Activated T-helper 1 cell treated with anti-CD3 and anti-CD28 coated beads, Interleukin-12 subunit alpha, Interleukin-12 subunit beta, Interleukin-2, Interleukin-4 antibody, amounts not matched to agents 30 ng/mL and 10 ng/mL and 1 ng/mL, durations not matched to agents 14 hours and 24 hours and 36 hours (primary cell): ENCODE measurements at regions of chr10 and their contacts with region 1.

Region 1: DNA sequence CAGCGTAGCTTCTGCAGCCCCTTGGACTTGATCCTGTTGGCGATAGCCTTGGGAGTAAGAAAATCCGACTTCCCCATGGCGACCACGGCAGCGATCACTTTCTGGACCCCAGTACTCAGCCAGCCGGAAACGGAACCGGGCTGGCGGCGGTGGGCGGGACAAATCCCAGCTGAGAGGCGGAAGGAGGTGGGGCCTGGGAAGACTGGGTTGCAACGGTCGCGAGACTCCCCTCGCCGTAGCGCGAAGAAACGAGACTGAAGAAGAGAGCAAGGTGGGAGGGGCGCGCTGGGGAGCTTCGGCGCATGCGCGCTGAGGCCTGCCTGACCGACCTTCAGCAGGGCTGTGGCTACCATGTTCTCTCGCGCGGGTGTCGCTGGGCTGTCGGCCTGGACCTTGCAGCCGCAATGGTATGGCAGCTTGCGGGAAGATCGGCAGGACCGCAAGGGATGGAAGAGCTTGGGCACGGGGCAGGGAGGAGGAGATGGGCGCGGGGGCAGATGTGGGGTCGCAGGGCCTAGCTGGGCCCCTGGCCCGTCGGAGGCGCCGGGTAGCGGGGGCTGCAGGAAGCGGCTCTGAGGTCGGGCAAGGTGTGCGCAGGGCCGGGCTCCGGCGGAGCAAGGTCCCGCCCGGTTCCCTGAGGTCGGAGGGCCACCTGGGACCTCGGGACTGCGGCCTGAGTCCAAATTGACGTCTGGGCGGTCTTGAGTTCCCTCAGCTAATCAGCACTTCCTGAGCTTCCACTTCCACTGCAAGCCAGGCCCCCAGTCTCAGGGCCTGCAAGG is at the starts of genes ATP5F1C and KIN:
- DNase-seq: peak; percentile 97
- H3K4me3 Mint-ChIP-seq: no peak within 1 kb of the TSS
- H3K27ac Mint-ChIP-seq: peak within 1 kb of the TSS; percentile 75
- H3K4me1 Mint-ChIP-seq: peaks cover 47% of the 10 kb centered on the region
- H3K27me3 Mint-ChIP-seq: no peaks in the 10 kb centered on the region
- total RNA-seq, gene ATP5F1C: 316 and 329 TPM in 2 replicates
- total RNA-seq, gene KIN: 11.0 and 12.3 TPM in 2 replicates

Region 2: GRCh38 chr10:7818295-7819122 is 30.5 kb after region 1 on chr10 and contains the start of gene TAF3:
- intact Hi-C with region 1: loop called (anchors 1 kb)
- DNase-seq: peak; percentile 92
- H3K4me3 Mint-ChIP-seq: peak within 1 kb of the TSS; percentile 97
- H3K27ac Mint-ChIP-seq: peak within 1 kb of the TSS; percentile 91
- H3K4me1 Mint-ChIP-seq: peaks cover 21% of the 10 kb centered on the region
- H3K27me3 Mint-ChIP-seq: peaks cover 20% of the 10 kb centered on the region
- total RNA-seq, gene TAF3: 15.1 and 16.3 TPM in 2 replicates

Region 3: DNA sequence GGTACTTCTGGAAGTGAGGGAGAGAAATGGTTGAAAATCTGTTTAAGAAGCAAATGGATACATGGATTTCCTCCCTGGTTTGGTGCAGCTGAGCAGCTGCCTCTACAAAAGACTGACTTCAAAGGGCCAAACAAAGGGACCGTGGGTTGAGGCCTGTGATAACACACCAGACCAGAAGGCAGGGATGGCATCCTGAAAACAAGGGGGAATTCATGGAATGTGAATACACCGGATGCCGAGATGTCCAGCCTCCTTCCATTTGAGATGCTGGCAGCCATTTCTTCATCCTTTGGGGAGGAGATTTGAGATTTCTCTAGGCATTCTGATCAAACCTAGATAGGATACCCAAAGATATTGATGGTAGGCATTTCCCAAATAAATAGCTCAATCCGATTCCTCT is 67.2 kb after region 1 on chr10:
- intact Hi-C with region 1: no loop called
- DNase-seq: no peak
- H3K4me3 Mint-ChIP-seq: no peak overlapping the region
- H3K27ac Mint-ChIP-seq: no peak overlapping the region
- H3K4me1 Mint-ChIP-seq: peaks cover 5% of the 10 kb centered on the region
- H3K27me3 Mint-ChIP-seq: no peaks in the 10 kb centered on the region

Region 4: GRCh38 chr10:7891634-7892033 is 103.6 kb after region 1 on chr10:
- intact Hi-C with region 1: no loop called
- DNase-seq: no peak
- H3K4me3 Mint-ChIP-seq: no peak overlapping the region
- H3K27ac Mint-ChIP-seq: no peak overlapping the region
- H3K4me1 Mint-ChIP-seq: no peaks in the 10 kb centered on the region
- H3K27me3 Mint-ChIP-seq: peaks cover 3% of the 10 kb centered on the region